Activated T-helper 1 cell treated with anti-CD3 and anti-CD28 coated beads, Interleukin-12 subunit alpha, Interleukin-12 subunit beta, Interleukin-2, Interleukin-4 antibody, amounts not matched to agents 30 ng/mL and 10 ng/mL and 1 ng/mL, durations not matched to agents 14 hours and 24 hours and 36 hours (primary cell): ENCODE measurements at regions of chr11 and their contacts with region 1.

Region 1: GRCh38 chr11:15006139-15006759 is 34.1 kb upstream of the CALCA start:
- DNase-seq: no peak
- H3K4me3 Mint-ChIP-seq: no peak overlapping the region
- H3K27ac Mint-ChIP-seq: no peak overlapping the region
- H3K4me1 Mint-ChIP-seq: no peaks in the 10 kb centered on the region
- H3K27me3 Mint-ChIP-seq: peaks cover 55% of the 10 kb centered on the region

Region 2: GRCh38 chr11:14789879-14790484 is 216.3 kb before region 1 on chr11:
- intact Hi-C with region 1: loop called (anchors 1 kb)
- DNase-seq: no peak
- H3K4me3 Mint-ChIP-seq: no peak overlapping the region
- H3K27ac Mint-ChIP-seq: peak overlapping the region; percentile 18
- H3K4me1 Mint-ChIP-seq: peaks cover 15% of the 10 kb centered on the region
- H3K27me3 Mint-ChIP-seq: no peaks in the 10 kb centered on the region

Region 3: DNA sequence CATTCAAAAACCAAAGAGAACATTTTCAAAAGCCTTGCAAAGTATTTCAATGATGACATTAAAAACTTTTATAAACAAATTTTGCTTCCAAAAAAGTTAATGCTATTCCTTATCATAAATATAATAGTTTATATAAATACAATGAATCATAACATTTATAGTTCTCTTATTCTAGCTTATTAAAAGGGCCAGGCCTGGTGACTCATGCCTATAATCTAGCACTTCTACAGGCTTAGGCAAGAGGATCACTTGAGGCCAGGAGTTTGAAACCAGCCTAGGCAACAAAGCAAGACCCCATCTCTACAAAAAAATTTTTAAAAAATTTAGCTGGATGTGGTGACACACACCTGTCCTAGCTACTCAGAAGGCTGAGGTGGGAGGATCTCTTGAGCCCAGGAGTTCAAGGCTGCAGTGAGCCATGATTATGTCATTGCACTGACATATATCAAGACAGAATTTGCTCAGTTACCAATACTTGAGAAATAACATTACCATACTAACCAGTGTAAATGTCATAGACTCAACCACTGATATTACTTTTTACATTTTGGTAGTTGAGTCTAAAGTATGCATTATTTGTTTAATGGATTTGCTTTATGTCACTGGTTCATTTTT is 170.7 kb before region 1 on chr11:
- intact Hi-C with region 1: no loop called
- DNase-seq: no peak
- H3K4me3 Mint-ChIP-seq: no peak overlapping the region
- H3K27ac Mint-ChIP-seq: no peak overlapping the region
- H3K4me1 Mint-ChIP-seq: no peaks in the 10 kb centered on the region
- H3K27me3 Mint-ChIP-seq: no peaks in the 10 kb centered on the region